ENCODE measurements at regions of chr9 and their contacts with region 1.

Region 1: GRCh38 chr9:16133556-16134227 is 580.8 kb downstream of the CCDC171 start:
- DNase-seq: peak; percentile 57
- ATAC-seq: peak; percentile 91
- H3K4me3 Mint-ChIP-seq: no peak overlapping the region
- H3K27ac Mint-ChIP-seq: no peak overlapping the region
- H3K4me1 Mint-ChIP-seq: peaks cover 6% of the 10 kb centered on the region
- H3K27me3 Mint-ChIP-seq: peaks cover 10% of the 10 kb centered on the region; the same call in 1 of the 2 replicates
- CTCF ChIP-seq: peak; percentile 87

Region 2: DNA sequence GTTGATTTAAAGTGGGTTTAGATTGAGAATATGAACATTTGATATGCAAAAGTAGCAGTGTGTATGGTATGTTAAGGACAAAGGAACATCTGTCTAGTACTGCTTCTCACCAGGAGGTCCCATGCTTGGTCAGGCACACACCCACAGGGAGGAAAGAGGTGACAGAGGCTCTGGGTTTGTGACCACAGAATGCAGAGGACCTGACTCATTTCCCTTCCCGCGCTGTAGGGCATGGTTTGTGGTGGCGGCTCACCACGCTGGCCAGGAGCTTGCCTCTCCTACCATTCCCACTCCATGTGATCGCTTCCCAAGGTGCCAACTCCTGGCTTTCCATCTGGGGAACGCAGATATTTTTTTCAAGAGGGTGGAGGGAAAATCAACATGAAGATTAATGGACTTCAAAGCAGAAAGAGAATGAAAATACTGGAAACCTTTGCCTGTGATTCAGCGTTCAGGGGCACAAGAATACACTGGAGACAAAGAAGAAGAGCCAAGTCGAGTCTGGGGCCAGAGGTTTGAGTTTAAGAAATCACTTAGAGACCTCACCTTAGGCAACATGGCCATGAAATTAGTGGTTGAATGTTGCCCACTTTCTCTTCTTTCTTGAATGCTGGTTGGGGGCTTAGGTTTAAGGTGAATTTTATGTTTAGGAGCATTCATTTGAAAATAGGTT is 103.0 kb before region 1 on chr9:
- CTCF ChIA-PET with region 1: interaction called, 20 read pairs
- POLR2A ChIA-PET with region 1: no interaction called
- DNase-seq: no peak
- ATAC-seq: no peak
- H3K4me3 Mint-ChIP-seq: no peak overlapping the region
- H3K27ac Mint-ChIP-seq: no peak overlapping the region
- H3K4me1 Mint-ChIP-seq: peaks cover 19% of the 10 kb centered on the region
- H3K27me3 Mint-ChIP-seq: peaks cover 3% of the 10 kb centered on the region; the same call in 1 of the 2 replicates
- CTCF ChIP-seq: no peak

Region 3: DNA sequence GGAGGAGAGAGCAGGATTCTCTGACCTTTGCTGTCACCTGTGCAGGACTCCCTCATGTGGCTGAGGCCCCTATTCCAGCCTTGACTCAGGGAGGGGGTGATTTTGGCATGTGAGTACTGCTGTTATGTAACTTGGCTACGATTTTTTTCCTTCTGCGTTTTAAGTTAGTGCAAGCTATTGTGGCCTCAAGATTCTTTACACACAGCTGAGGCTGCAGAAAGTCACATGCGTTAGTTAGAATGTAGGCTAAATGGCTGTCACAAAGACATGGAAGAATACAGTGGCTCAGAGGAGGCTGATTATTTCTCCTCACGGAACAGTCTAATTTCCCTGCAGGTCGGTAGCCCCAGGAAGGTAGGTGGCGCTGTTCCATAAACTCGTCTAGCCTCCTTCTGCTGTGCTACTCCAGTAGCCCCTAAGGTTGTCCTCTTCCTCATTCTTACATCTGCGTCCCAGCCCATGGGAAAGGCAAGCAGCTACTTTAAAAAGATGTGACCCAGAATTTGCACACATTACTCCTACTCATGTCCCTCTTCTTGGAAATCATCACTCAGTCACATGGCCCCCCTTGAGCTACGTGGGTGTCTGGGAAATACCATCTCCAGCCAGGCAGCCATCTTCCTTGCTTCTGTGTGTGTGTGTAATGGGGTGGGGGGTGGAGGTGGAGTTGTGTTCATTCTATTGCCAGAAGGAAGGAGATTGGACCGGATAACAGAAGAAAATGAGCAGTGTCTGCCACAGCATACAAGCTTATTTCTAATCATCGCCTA is 94.3 kb before region 1 on chr9:
- CTCF ChIA-PET with region 1: interaction called, 49 read pairs
- POLR2A ChIA-PET with region 1: no interaction called
- DNase-seq: peak; percentile 69
- ATAC-seq: peak; percentile 85
- H3K4me3 Mint-ChIP-seq: no peak overlapping the region
- H3K27ac Mint-ChIP-seq: no peak overlapping the region
- H3K4me1 Mint-ChIP-seq: peaks cover 20% of the 10 kb centered on the region
- H3K27me3 Mint-ChIP-seq: no peaks in the 10 kb centered on the region
- CTCF ChIP-seq: peak; percentile 45

Region 4: GRCh38 chr9:16103620-16104397 is 29.9 kb before region 1 on chr9:
- CTCF ChIA-PET with region 1: interaction called, 11 read pairs
- POLR2A ChIA-PET with region 1: no interaction called
- DNase-seq: no peak
- ATAC-seq: no peak
- H3K4me3 Mint-ChIP-seq: no peak overlapping the region
- H3K27ac Mint-ChIP-seq: no peak overlapping the region
- H3K4me1 Mint-ChIP-seq: peaks cover 19% of the 10 kb centered on the region
- H3K27me3 Mint-ChIP-seq: no peaks in the 10 kb centered on the region
- CTCF ChIP-seq: no peak

Region 5: GRCh38 chr9:16154521-16155078 is 20.9 kb after region 1 on chr9:
- CTCF ChIA-PET with region 1: interaction called, 13 read pairs
- POLR2A ChIA-PET with region 1: no interaction called
- DNase-seq: peak; percentile 79
- ATAC-seq: peak; percentile 98
- H3K4me3 Mint-ChIP-seq: peak overlapping the region; percentile 58
- H3K27ac Mint-ChIP-seq: no peak overlapping the region
- H3K4me1 Mint-ChIP-seq: peaks cover 10% of the 10 kb centered on the region
- H3K27me3 Mint-ChIP-seq: peaks cover 31% of the 10 kb centered on the region
- CTCF ChIP-seq: peak; percentile 25; the same call in 1 of the 2 replicates